ENCODE measurements at regions of chr19 and their contacts with region 1.

Region 1: GRCh38 chr19:36172852-36173251 is 20.6 kb upstream of the COX7A1 start:
- DNase-seq: no peak
- H3K4me3 ChIP-seq: no peak overlapping the region
- H3K27ac ChIP-seq: no peak overlapping the region
- H3K4me1 ChIP-seq: no peaks in the 10 kb centered on the region
- H3K27me3 ChIP-seq: no peaks in the 10 kb centered on the region
- CTCF ChIP-seq: no peak
- POLR2A ChIP-seq: no peak

Region 2: GRCh38 chr19:34316741-34317301 is 1856.0 kb before region 1 on chr19:
- intact Hi-C with region 1: no loop called
- DNase-seq: no peak
- H3K4me3 ChIP-seq: no peak overlapping the region
- H3K27ac ChIP-seq: peak overlapping the region; percentile 40 to 76
- H3K4me1 ChIP-seq: peaks cover 8 to 14% of the 10 kb centered on the region in 2 donors
- H3K27me3 ChIP-seq: no peaks in the 10 kb centered on the region
- CTCF ChIP-seq: no peak
- POLR2A ChIP-seq: no peak

Region 3: DNA sequence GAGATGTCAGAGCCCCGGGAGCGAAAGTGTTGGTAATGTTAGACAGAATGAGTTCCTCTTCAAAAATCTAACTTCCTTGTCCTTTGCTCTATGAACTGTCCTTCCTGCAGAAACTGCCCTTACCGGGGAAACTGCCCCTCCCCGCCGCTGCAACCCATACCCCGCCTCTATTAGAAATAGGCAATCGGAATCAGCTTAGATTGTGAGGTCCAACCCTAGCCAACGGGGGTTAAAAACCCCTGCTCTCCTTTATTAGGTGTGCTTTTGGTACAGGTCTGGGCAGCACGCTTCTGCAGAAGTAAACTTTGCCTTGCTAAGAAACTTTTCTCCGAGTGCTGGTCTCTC is 44.5 kb before region 1 on chr19:
- intact Hi-C with region 1: loop called (anchors 10 kb)
- DNase-seq: no peak
- H3K4me3 ChIP-seq: peak overlapping the region; percentile 35 to 71 (median 53)
- H3K27ac ChIP-seq: peak overlapping the region; percentile 91 to 95
- H3K4me1 ChIP-seq: peaks cover 0 to 5% of the 10 kb centered on the region in 2 donors
- H3K27me3 ChIP-seq: no peaks in the 10 kb centered on the region
- CTCF ChIP-seq: no peak
- POLR2A ChIP-seq: no peak

Region 4: DNA sequence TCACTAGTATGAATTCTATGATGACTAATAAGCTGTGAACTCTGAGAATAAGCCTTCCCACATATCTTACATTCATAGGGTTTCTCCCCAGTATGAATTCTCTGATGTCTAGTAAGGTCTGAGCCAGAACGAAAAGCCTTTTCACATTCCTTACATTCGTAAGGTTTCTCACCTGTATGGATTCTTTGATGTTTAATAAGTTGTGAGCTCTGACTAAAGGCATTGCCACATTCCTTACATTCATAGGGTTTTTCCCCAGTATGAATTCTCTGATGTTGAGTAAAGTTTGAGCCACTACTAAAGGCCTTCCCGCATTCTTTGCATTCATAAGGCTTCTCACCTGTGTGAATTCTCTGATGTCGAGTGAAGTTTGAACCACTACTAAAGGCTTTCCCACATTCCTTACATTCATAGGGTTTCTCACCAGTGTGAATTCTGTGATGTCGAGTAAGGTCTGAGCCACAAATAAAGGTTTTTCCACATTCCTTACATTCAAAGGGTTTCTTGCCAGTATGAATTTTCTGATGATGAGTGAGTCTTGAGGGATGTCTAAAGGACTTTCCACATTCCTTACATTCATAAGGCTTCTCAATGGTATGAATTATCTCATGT is 276.3 kb after region 1 on chr19:
- intact Hi-C with region 1: no loop called
- DNase-seq: no peak
- H3K4me3 ChIP-seq: peak overlapping the region in 1 of 3 donors; percentile 29
- H3K27ac ChIP-seq: no peak overlapping the region
- H3K4me1 ChIP-seq: no peaks in the 10 kb centered on the region
- H3K27me3 ChIP-seq: no peaks in the 10 kb centered on the region
- CTCF ChIP-seq: no peak
- POLR2A ChIP-seq: no peak

Region 5: DNA sequence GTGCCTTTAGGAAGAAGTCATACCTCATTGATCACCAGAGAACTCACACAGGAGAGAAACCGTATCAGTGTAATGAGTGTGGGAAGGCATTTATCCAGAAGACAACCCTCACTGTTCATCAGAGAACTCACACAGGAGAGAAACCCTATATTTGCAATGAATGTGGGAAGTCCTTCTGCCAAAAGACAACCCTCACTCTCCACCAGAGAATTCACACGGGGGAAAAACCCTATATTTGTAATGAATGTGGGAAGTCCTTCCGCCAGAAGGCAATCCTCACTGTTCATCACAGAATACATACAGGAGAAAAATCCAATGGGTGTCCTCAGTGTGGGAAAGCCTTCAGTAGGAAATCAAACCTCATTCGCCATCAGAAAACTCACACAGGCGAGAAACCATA is 454.2 kb after region 1 on chr19:
- intact Hi-C with region 1: no loop called
- DNase-seq: no peak
- H3K4me3 ChIP-seq: no peak overlapping the region
- H3K27ac ChIP-seq: no peak overlapping the region
- H3K4me1 ChIP-seq: no peaks in the 10 kb centered on the region
- H3K27me3 ChIP-seq: no peaks in the 10 kb centered on the region
- CTCF ChIP-seq: no peak
- POLR2A ChIP-seq: no peak